Left colon (tissue), 2 donors: ENCODE measurements at regions of chr12 and their contacts with region 1.

Region 1: DNA sequence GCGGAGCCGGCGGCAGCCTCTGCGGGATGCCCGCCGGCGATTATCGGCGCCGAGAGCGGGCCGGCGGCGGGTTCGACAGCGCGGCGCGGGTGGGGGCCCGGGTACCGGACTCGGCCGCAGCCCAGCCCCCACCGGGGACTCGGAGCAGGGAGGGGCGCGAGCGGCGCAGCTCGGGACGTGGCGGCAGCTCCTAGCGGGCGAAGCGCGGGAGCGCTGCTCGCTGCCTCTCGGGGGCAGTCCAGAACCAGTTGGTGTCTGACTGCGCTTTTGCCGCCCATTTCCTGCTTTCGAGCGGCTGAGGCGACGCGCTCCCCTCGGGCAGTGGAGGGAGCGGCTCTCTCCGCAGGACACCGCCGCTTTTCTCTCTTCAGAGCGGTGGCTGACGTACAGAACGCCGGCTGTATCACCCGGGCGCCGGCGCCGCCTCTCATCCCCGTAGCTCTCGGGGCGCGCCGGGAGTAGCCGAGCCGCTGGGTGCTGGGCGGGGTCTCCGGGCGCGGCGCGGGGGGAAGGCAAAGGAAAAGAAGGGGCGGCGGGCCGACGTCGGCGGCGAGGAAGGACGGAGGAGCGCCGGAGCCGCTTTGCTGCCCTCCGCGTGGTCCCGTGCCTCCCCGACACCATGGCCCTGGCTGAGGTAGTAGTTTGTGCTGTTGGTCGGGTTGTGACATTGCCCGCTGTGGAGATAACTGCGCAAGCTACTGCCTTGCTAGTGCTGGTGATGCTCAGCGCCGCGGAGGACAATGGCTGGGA is 136.6 kb downstream of the MON2 start:
- DNase-seq: peak; percentile 87
- ATAC-seq: peak; percentile 86

Region 2: GRCh38 chr12:62793256-62794217 is 190.3 kb after region 1 on chr12:
- intact Hi-C with region 1: loop called in 1 of 2 experiments (anchors 5 kb)
- DNase-seq: peak; percentile 65 to 88
- ATAC-seq: peak; percentile 86